ENCODE measurements at regions of chr7 and their contacts with region 1.

Region 1: GRCh38 chr7:120272261-120272660 is 714 bp upstream of the KCND2 start:
- DNase-seq: peak; percentile 60
- H3K4me3 ChIP-seq: peak overlapping the region; percentile 32
- H3K27ac ChIP-seq: no peak overlapping the region
- H3K4me1 ChIP-seq: peaks cover 4% of the 10 kb centered on the region
- H3K27me3 ChIP-seq: peaks cover 19% of the 10 kb centered on the region
- CTCF ChIP-seq: peak; percentile 75

Region 2: DNA sequence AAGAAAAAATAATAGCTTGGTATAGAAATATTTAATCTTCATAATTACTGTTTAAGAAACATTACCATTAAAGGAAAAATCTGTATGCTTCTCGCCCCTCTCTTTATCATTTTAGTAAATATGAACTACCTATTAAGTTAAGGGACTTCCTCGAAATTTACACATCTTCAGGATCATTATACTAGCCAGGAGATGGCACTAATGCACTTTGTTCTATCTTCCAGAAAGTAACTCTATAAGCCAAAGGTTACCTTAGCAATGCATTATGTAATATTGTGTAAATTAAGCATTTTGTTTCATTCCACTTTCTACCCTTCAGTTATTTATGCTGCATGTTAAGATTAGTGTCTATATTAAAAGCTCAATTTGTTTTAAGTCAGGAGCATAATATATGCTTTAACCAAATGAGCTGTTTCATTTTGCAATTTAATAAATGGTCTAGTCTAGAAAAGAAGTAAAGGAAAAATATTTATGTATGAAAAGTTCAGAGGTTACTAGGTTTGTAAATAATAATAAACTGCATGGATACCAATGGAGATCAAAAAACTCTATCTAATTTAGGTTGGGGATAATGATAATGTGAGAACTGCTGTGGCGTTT is 1919.3 kb before region 1 on chr7:
- CTCF ChIA-PET with region 1: no interaction called
- POLR2A ChIA-PET with region 1: no interaction called
- intact Hi-C with region 1: loop called (anchors 10 kb)
- DNase-seq: peak; percentile 67
- H3K4me3 ChIP-seq: no peak overlapping the region
- H3K27ac ChIP-seq: no peak overlapping the region
- H3K4me1 ChIP-seq: no peaks in the 10 kb centered on the region
- H3K27me3 ChIP-seq: no peaks in the 10 kb centered on the region
- CTCF ChIP-seq: peak; percentile 61

Region 3: GRCh38 chr7:119270045-119270464 is 1002.2 kb before region 1 on chr7:
- CTCF ChIA-PET with region 1: no interaction called
- POLR2A ChIA-PET with region 1: no interaction called
- intact Hi-C with region 1: loop called (anchors 5 kb)
- DNase-seq: peak; percentile 78
- H3K4me3 ChIP-seq: no peak overlapping the region
- H3K27ac ChIP-seq: no peak overlapping the region
- H3K4me1 ChIP-seq: no peaks in the 10 kb centered on the region
- H3K27me3 ChIP-seq: no peaks in the 10 kb centered on the region
- CTCF ChIP-seq: peak; percentile 88

Region 4: DNA sequence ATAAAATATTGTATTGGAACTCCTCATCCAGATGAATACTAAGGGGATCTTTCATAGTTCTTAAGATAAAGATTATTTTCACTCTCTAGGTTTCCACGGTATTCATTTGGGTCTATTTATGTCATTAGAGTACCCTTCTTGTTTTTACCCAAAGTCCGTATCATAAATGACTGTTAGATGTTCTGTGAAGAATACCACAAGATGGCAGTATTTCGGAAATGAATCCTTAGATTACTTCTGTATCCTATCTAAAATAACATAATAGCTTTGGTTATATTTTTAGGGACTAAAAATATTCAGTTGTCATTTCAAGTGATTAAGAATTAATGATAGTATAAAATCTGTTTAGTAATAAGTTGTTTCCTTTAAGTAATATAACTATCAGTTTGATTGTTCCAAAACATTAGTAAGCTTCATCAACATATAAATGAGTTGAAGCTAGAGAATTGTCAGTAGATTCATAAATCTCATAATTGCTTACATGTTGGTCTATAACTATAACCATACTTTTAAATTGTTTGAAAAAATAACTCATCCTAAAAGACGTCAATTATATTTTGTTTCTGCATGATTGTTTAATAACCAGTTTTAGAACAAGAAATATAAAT is 336.7 kb before region 1 on chr7:
- CTCF ChIA-PET with region 1: interaction called, 3 read pairs
- POLR2A ChIA-PET with region 1: no interaction called
- intact Hi-C with region 1: loop called (anchors 1 kb)
- DNase-seq: peak; percentile 52
- H3K4me3 ChIP-seq: no peak overlapping the region
- H3K27ac ChIP-seq: no peak overlapping the region
- H3K4me1 ChIP-seq: no peaks in the 10 kb centered on the region
- H3K27me3 ChIP-seq: no peaks in the 10 kb centered on the region
- CTCF ChIP-seq: peak; percentile 65

Region 5: DNA sequence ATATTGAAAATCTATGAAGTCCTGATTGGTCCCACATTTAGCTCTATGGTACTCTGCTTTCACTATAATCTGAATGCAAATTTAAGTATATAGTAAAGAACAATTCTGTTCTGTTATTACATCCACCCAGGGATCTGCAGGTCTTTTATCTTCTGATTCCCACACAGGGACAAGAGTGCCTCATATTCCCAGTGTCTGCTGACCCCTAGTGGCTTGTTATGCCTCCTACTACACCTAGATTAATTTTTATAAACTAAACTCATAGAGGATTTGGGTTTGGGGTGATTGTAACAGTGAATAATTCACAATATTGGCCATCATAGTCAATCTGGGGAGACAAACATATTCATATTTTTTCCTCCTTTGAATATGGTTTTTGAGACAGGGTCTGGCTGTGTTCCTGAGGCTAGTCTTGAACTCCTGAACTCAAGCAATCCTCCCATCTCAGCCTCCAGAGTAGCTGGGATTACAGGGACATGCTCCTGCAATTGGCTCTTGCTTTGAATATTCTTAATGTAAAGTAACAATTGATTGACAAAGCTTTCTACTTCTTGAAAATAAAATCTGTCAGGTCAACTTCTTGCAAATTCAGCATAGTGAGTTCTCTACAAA is 282.8 kb after region 1 on chr7:
- CTCF ChIA-PET with region 1: no interaction called
- POLR2A ChIA-PET with region 1: no interaction called
- intact Hi-C with region 1: loop called (anchors 5 kb)
- DNase-seq: peak; percentile 71
- H3K4me3 ChIP-seq: no peak overlapping the region
- H3K27ac ChIP-seq: no peak overlapping the region
- H3K4me1 ChIP-seq: peaks cover 16% of the 10 kb centered on the region
- H3K27me3 ChIP-seq: no peaks in the 10 kb centered on the region
- CTCF ChIP-seq: peak; percentile 81

Region 6: GRCh38 chr7:121547544-121548092 is 1275.4 kb after region 1 on chr7:
- CTCF ChIA-PET with region 1: no interaction called
- POLR2A ChIA-PET with region 1: no interaction called
- intact Hi-C with region 1: no loop called
- DNase-seq: peak; percentile 72
- H3K4me3 ChIP-seq: no peak overlapping the region
- H3K27ac ChIP-seq: no peak overlapping the region
- H3K4me1 ChIP-seq: peaks cover 3% of the 10 kb centered on the region
- H3K27me3 ChIP-seq: no peaks in the 10 kb centered on the region
- CTCF ChIP-seq: peak; percentile 85

Measured in A673 (cell line).